Prostate gland (tissue), 2 donors: ENCODE measurements at regions of chr4 and their contacts with region 1.

Region 1: GRCh38 chr4:15457406-15458201 is 12.1 kb upstream of the CC2D2A start:
- DNase-seq: no peak
- H3K4me3 ChIP-seq: no peak overlapping the region
- H3K27ac ChIP-seq: peak overlapping the region in 1 of 2 donors; percentile 27
- H3K4me1 ChIP-seq: no peaks in the 10 kb centered on the region
- H3K27me3 ChIP-seq: no peaks in the 10 kb centered on the region
- CTCF ChIP-seq: peak; percentile 12 to 85 (median 78)
- POLR2A ChIP-seq: no peak

Region 2: GRCh38 chr4:15001869-15002658 is 455.5 kb before region 1 on chr4 and contains the start of gene CPEB2:
- intact Hi-C with region 1: loop called (anchors 10 kb)
- DNase-seq: peak; percentile 96
- H3K4me3 ChIP-seq: peak within 1 kb of the TSS; percentile 96 to 99
- H3K27ac ChIP-seq: peak within 1 kb of the TSS; percentile 99 to 100
- H3K4me1 ChIP-seq: no peaks in the 10 kb centered on the region
- H3K27me3 ChIP-seq: no peaks in the 10 kb centered on the region
- CTCF ChIP-seq: peak in 1 of 4 experiments; percentile 14
- POLR2A ChIP-seq: peak; percentile 98
- total RNA-seq, gene CPEB2: 14.5 to 47.3 TPM

Region 3: GRCh38 chr4:15231265-15232091 is 226.1 kb before region 1 on chr4:
- intact Hi-C with region 1: loop called (anchors 2 kb)
- DNase-seq: peak; percentile 77
- H3K4me3 ChIP-seq: no peak overlapping the region
- H3K27ac ChIP-seq: no peak overlapping the region
- H3K4me1 ChIP-seq: no peaks in the 10 kb centered on the region
- H3K27me3 ChIP-seq: no peaks in the 10 kb centered on the region
- CTCF ChIP-seq: peak; percentile 43 to 75 (median 72)
- POLR2A ChIP-seq: no peak

Region 4: DNA sequence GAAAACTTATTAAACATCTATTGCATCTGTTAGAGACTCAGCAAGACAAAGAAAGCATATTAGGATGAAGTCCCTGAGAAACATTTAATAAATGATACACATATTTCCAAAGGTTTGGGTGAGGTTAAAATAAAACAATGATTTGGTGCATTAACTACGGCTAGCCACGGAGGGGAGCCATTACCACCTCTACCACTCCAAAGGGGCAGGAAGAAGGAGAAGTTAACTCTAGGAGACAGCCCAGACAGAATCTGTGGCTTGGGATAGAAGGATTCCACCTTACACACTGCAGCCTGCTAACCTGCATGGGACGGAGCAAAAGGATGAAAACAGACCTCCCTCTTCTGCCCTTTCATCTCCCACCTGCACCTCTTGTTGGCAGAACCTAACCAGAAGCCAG is 218.9 kb before region 1 on chr4:
- intact Hi-C with region 1: loop called (anchors 2 kb)
- DNase-seq: no peak
- H3K4me3 ChIP-seq: no peak overlapping the region
- H3K27ac ChIP-seq: no peak overlapping the region
- H3K4me1 ChIP-seq: no peaks in the 10 kb centered on the region
- H3K27me3 ChIP-seq: no peaks in the 10 kb centered on the region
- CTCF ChIP-seq: peak in 3 of 4 experiments; percentile 37 to 50 (median 44)
- POLR2A ChIP-seq: no peak

Region 5: DNA sequence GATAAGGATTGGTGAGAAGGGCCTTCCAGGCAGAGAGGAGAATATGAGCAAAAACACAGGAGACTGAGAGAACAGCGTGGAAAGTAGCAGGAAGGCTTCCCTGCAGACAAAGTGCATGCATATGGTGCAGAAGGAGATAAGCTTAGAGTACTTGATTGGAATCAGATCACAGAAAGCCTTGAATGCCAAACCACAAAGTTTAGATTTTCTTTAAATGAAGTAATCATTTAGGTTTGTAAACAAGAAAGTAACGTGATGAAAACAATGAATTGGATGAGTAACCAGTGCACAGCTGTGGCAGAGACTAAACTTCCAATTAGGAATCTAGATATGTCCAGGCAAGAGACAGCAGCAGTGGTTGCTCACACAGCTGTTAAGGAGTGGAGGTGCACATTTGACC is 113.6 kb before region 1 on chr4:
- intact Hi-C with region 1: loop called (anchors 5 kb)
- DNase-seq: no peak
- H3K4me3 ChIP-seq: no peak overlapping the region
- H3K27ac ChIP-seq: no peak overlapping the region
- H3K4me1 ChIP-seq: no peaks in the 10 kb centered on the region
- H3K27me3 ChIP-seq: no peaks in the 10 kb centered on the region
- CTCF ChIP-seq: no peak
- POLR2A ChIP-seq: no peak

Region 6: DNA sequence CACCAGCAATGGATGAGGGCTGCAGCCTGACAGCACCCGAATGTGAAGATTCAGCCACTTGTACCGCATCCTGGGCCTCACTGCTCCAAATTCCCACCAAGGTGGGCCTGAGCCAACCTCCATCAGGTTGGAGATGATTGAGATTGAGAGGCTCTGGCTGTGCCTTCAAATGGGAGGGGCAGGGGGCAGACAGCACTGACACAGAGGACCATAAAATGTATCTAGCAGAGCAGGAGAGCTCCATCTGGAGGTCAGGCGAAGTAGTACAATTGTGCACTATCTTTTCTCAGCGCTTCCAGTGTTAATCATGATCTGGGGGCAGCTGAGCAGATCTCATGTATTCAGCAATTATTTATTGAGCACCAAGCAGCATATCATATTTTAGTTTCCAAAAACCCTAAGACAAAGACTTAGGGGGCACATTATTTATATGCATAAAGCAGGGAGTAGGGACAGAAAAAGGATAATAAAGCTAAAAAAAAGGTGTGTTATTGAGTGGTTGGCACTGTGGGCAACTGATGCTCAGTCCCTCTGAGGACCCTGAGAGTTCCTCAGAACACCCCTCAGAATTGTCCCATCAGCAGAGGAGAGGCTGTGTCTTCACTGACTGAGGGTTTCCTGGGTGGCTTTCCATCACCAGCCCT is 61.3 kb before region 1 on chr4:
- intact Hi-C with region 1: loop called (anchors 5 kb)
- DNase-seq: no peak
- H3K4me3 ChIP-seq: no peak overlapping the region
- H3K27ac ChIP-seq: peak overlapping the region in 1 of 2 donors; percentile 21
- H3K4me1 ChIP-seq: no peaks in the 10 kb centered on the region
- H3K27me3 ChIP-seq: no peaks in the 10 kb centered on the region
- CTCF ChIP-seq: peak in 3 of 4 experiments; percentile 60 to 67 (median 64)
- POLR2A ChIP-seq: no peak

Region 7: GRCh38 chr4:15738877-15739276 is 281.3 kb after region 1 on chr4:
- intact Hi-C with region 1: no loop called
- DNase-seq: no peak
- H3K4me3 ChIP-seq: no peak overlapping the region
- H3K27ac ChIP-seq: no peak overlapping the region
- H3K4me1 ChIP-seq: no peaks in the 10 kb centered on the region
- H3K27me3 ChIP-seq: no peaks in the 10 kb centered on the region
- CTCF ChIP-seq: no peak
- POLR2A ChIP-seq: no peak